Heart left ventricle (tissue), 16 donors: ENCODE measurements at regions of chr1 and their contacts with region 1.

Region 1: GRCh38 chr1:100152271-100152670 is 19.3 kb downstream of the TRMT13 start:
- DNase-seq: no peak
- ATAC-seq: no peak
- H3K4me3 ChIP-seq: no peak overlapping the region
- H3K27ac ChIP-seq: no peak overlapping the region
- H3K4me1 ChIP-seq: no peaks in the 10 kb centered on the region
- H3K27me3 ChIP-seq: no peaks in the 10 kb centered on the region
- CTCF ChIP-seq: no peak
- POLR2A ChIP-seq: no peak

Region 2: DNA sequence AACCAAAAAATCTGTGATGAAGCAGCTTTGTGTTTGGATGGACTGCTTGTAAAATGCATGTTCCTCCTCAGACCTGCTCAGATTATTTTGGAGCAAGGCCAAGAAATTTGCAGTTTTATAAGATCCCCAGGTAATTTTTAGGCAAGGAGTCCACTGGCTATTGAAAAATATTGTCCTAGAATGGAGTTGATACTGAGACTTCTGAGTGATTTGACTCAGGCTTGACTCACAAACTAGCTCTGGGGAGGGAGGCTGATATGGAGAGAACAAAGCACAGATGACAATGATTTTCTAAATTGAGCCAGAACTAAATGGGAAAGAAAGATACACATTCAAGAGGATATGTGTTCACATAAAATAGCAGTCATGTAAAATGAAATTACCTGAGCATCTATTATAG is 265.4 kb before region 1 on chr1:
- intact Hi-C with region 1: loop called in 3 of 10 experiments (anchors 10 kb)
- DNase-seq: no peak
- ATAC-seq: no peak
- H3K4me3 ChIP-seq: no peak overlapping the region
- H3K27ac ChIP-seq: no peak overlapping the region
- H3K4me1 ChIP-seq: no peaks in the 10 kb centered on the region
- H3K27me3 ChIP-seq: no peaks in the 10 kb centered on the region
- CTCF ChIP-seq: no peak
- POLR2A ChIP-seq: no peak

Region 3: GRCh38 chr1:99906535-99906934 is 245.7 kb before region 1 on chr1:
- intact Hi-C with region 1: loop called in 1 of 10 experiments (anchors 10 kb)
- DNase-seq: no peak
- ATAC-seq: no peak
- H3K4me3 ChIP-seq: no peak overlapping the region
- H3K27ac ChIP-seq: no peak overlapping the region
- H3K4me1 ChIP-seq: no peaks in the 10 kb centered on the region
- H3K27me3 ChIP-seq: no peaks in the 10 kb centered on the region
- CTCF ChIP-seq: no peak
- POLR2A ChIP-seq: no peak

Region 4: DNA sequence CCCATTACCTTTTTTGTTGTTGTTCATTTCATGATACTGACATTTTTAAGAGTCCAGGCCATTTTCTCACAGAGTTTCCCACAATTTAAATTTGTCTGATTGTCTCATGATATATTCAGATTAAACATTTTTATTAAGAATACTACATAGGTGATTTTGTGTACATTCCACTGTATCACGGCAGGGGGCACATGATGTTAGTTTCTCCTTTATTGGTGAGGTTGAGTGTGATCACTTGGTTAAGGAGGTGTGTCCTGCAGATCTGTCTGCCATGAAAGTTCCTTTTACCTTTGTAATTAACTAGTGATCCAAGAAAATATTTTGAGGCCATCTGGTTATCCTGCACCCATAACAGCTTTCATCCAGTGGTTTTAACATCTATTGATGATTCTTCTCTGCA is 125.6 kb after region 1 on chr1:
- intact Hi-C with region 1: loop called in 2 of 10 experiments (anchors 10 kb)
- DNase-seq: no peak
- ATAC-seq: no peak
- H3K4me3 ChIP-seq: no peak overlapping the region
- H3K27ac ChIP-seq: no peak overlapping the region
- H3K4me1 ChIP-seq: peaks cover 0 to 14% (median 3%) of the 10 kb centered on the region in 12 donors
- H3K27me3 ChIP-seq: no peaks in the 10 kb centered on the region
- CTCF ChIP-seq: no peak
- POLR2A ChIP-seq: no peak